Dorsolateral prefrontal cortex (tissue), 120 donors: ENCODE measurements at regions of chr10 and their contacts with region 1.

Region 1: GRCh38 chr10:123043409-123043925 is 34.7 kb downstream of the ACADSB start:
- DNase-seq: peak; percentile 10 to 78 (median 64)
- H3K4me3 ChIP-seq: no peak overlapping the region
- H3K27ac ChIP-seq: peak overlapping the region in 23 of 59 donors; percentile 3 to 75 (median 34)
- H3K27me3 ChIP-seq: no peaks in the 10 kb centered on the region
- CTCF ChIP-seq: peak; percentile 49 to 92 (median 80)

Region 2: GRCh38 chr10:123069246-123069986 is 25.9 kb after region 1 on chr10:
- intact Hi-C with region 1: loop called in 1 of 2 experiments (anchors 2 kb)
- DNase-seq: no peak
- H3K4me3 ChIP-seq: peak overlapping the region in 30 of 59 donors; percentile 1 to 48 (median 24)
- H3K27ac ChIP-seq: peak overlapping the region in 47 of 59 donors; percentile 11 to 86 (median 61)
- H3K27me3 ChIP-seq: peaks cover 0 to 6% (median 0%) of the 10 kb centered on the region in 45 donors
- CTCF ChIP-seq: peak in 3 of 56 donors; percentile 14 to 18 (median 14)

Region 3: GRCh38 chr10:123132576-123133477 is 89.4 kb after region 1 on chr10:
- intact Hi-C with region 1: loop called in 1 of 2 experiments (anchors 5 kb)
- DNase-seq: peak; percentile 68 to 86 (median 81)
- H3K4me3 ChIP-seq: peak overlapping the region in 43 of 59 donors; percentile 2 to 63 (median 31)
- H3K27ac ChIP-seq: no peak overlapping the region
- H3K27me3 ChIP-seq: peaks cover 31 to 98% (median 71%) of the 10 kb centered on the region in 45 donors
- CTCF ChIP-seq: peak; percentile 40 to 98 (median 90)

Region 4: DNA sequence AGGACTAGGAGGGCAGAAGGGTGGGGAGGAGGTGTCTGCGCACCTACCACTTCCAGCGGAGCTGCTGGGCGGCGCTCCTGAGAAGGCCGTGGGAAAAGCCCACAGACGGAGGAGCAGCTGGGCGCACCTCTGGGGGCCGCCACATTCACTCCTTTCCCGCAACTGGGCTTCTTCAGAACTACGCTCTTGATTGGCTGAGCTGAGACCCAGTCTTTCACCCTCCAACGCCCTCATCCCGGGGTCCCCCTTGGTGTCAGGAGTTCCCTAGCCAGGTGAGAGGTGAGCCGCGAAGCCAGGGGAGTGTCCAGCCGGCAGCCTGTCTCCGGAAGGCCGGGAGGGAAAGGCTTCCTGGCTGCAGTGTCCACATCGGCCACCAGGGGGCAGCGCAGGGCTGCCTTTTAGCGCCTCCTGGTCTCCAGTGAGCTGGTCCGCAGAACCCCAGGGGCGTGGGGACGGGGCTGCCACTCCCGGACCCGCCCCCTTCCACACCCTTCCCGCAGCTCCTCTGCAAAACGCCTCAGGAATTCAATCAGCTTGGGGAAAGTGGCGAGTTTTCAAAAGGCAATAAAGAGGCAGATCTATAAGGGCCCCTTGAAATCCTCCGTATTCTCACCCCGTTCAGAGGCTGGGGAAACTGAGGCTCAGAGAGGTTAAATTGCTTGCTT is 951.1 kb after region 1 on chr10:
- intact Hi-C with region 1: no loop called
- DNase-seq: peak; percentile 72 to 91 (median 82)
- H3K4me3 ChIP-seq: peak overlapping the region in 54 of 59 donors; percentile 0 to 55 (median 32)
- H3K27ac ChIP-seq: no peak overlapping the region
- H3K27me3 ChIP-seq: peaks cover 0 to 55% (median 25%) of the 10 kb centered on the region in 45 donors
- CTCF ChIP-seq: peak; percentile 98 to 100 (median 100)